ENCODE measurements at regions of chr4 and their contacts with region 1.

Region 1: GRCh38 chr4:94412658-94413038 is 39.1 kb upstream of the PDLIM5 start:
- DNase-seq: no peak
- H3K4me3 ChIP-seq: peak overlapping the region in 2 of 59 donors; percentile 10 to 24
- H3K27ac ChIP-seq: no peak overlapping the region
- H3K27me3 ChIP-seq: peaks cover 0 to 6% (median 0%) of the 10 kb centered on the region in 45 donors
- CTCF ChIP-seq: no peak

Region 2: GRCh38 chr4:93828332-93828994 is 584.2 kb before region 1 on chr4 and contains the start of gene ATOH1:
- intact Hi-C with region 1: no loop called
- DNase-seq: no peak
- H3K4me3 ChIP-seq: peak within 1 kb of the TSS; percentile 5 to 72 (median 45)
- H3K27ac ChIP-seq: no peak within 1 kb of the TSS
- H3K27me3 ChIP-seq: peaks cover 7 to 83% (median 75%) of the 10 kb centered on the region in 45 donors
- CTCF ChIP-seq: no peak
- total RNA-seq, gene ATOH1: not detected

Region 3: GRCh38 chr4:94271248-94271647 is 141.4 kb before region 1 on chr4:
- intact Hi-C with region 1: no loop called
- DNase-seq: no peak
- H3K4me3 ChIP-seq: no peak overlapping the region
- H3K27ac ChIP-seq: no peak overlapping the region
- H3K27me3 ChIP-seq: no peaks in the 10 kb centered on the region
- CTCF ChIP-seq: no peak

Region 4: GRCh38 chr4:94446386-94446785 is 33.7 kb after region 1 on chr4:
- intact Hi-C with region 1: loop called in 1 of 2 experiments (anchors 5 kb)
- DNase-seq: no peak
- H3K4me3 ChIP-seq: no peak overlapping the region
- H3K27ac ChIP-seq: no peak overlapping the region
- H3K27me3 ChIP-seq: peaks cover 0 to 6% (median 0%) of the 10 kb centered on the region in 45 donors
- CTCF ChIP-seq: no peak

Region 5: GRCh38 chr4:94457692-94458106 is 45.1 kb after region 1 on chr4:
- intact Hi-C with region 1: no loop called
- DNase-seq: no peak
- H3K4me3 ChIP-seq: peak overlapping the region in 6 of 59 donors; percentile 2 to 15 (median 12)
- H3K27ac ChIP-seq: peak overlapping the region in 32 of 59 donors; percentile 1 to 94 (median 23)
- H3K27me3 ChIP-seq: no peaks in the 10 kb centered on the region
- CTCF ChIP-seq: no peak

Region 6: GRCh38 chr4:94590493-94590892 is 177.8 kb after region 1 on chr4:
- intact Hi-C with region 1: loop called in 1 of 2 experiments (anchors 5 kb)
- DNase-seq: no peak
- H3K4me3 ChIP-seq: no peak overlapping the region
- H3K27ac ChIP-seq: no peak overlapping the region
- H3K27me3 ChIP-seq: no peaks in the 10 kb centered on the region
- CTCF ChIP-seq: no peak

Measured in dorsolateral prefrontal cortex (tissue), 120 donors.